PC-3 (cell line): ENCODE measurements at regions of chr4 and their contacts with region 1.

Region 1: GRCh38 chr4:55184600-55185523 is 59.5 kb upstream of the KDR start:
- DNase-seq: peak; percentile 76
- ATAC-seq: peak; percentile 38
- H3K4me3 ChIP-seq: peak overlapping the region; percentile 27
- H3K27ac ChIP-seq: peak overlapping the region; percentile 76
- H3K4me1 ChIP-seq: peaks cover 33% of the 10 kb centered on the region
- H3K27me3 ChIP-seq: no peaks in the 10 kb centered on the region
- CTCF ChIP-seq: peak; percentile 89

Region 2: DNA sequence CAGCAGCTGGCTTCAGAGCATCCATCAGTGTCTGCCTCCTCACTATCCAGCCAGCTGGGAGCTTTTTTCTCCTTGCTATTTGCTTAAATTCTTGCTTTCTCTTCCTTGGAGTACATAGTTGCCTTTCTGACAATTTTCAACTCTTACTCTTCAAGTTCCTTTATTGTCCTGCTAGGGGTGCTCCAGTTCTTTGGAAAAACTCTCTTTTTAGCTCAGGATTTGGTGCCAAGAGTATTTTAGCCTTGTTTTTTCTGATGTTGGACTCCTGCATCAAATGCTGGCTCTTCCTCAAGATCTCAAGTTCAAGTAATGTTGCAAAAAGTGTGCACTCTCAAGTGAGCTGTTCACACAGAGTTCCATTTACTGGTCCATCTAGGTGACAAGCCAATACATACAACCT is 185.9 kb before region 1 on chr4:
- CTCF ChIA-PET with region 1: interaction called, 3 read pairs
- POLR2A ChIA-PET with region 1: no interaction called
- intact Hi-C with region 1: loop called (anchors 2 kb)
- DNase-seq: peak; percentile 55
- ATAC-seq: peak; percentile 60
- H3K4me3 ChIP-seq: no peak overlapping the region
- H3K27ac ChIP-seq: no peak overlapping the region
- H3K4me1 ChIP-seq: peaks cover 7% of the 10 kb centered on the region; the same call in 1 of the 2 replicates
- H3K27me3 ChIP-seq: no peaks in the 10 kb centered on the region
- CTCF ChIP-seq: peak; percentile 75

Region 3: DNA sequence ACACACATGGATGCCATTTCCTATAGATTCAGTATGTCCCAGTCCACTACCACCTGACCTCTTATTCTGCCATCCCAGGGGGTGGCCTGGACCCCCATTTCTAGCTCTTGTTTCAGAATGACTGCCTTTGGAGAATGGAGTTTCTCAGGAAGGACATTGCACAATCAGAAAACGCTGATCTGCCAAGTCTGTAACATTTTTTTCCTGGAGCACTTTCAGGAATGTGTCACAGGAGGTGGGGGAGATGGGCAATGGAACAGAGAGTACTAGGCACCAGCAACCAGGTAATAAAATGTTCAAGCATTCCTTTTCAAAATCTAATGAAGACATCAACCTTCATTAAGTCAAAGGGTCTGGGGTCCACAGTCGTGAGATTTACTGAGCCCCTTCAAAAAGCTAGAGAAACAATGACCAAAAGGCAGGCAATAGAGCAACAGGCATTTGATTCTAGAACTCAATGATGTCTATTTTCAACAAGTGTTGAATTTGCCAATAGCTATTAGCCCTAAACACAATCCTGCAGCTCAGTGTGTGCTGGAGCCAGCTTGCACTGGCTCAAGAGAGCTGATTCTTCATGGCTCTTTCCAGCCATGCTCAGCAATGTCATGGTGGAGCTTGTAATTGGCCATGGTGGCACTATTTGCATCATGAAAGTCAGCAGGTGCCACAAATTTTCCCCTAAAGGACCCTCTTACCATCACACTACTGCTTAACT is 146.5 kb before region 1 on chr4:
- CTCF ChIA-PET with region 1: no interaction called
- POLR2A ChIA-PET with region 1: no interaction called
- intact Hi-C with region 1: loop called (anchors 10 kb)
- DNase-seq: peak; percentile 62
- ATAC-seq: no peak
- H3K4me3 ChIP-seq: no peak overlapping the region
- H3K27ac ChIP-seq: no peak overlapping the region
- H3K4me1 ChIP-seq: peaks cover 13% of the 10 kb centered on the region
- H3K27me3 ChIP-seq: no peaks in the 10 kb centered on the region
- CTCF ChIP-seq: no peak

Region 4: GRCh38 chr4:55398966-55399365 is 214.1 kb after region 1 on chr4:
- CTCF ChIA-PET with region 1: no interaction called
- POLR2A ChIA-PET with region 1: no interaction called
- intact Hi-C with region 1: no loop called
- DNase-seq: no peak
- ATAC-seq: no peak
- H3K4me3 ChIP-seq: peak overlapping the region; percentile 72
- H3K27ac ChIP-seq: peak overlapping the region; percentile 4; the same call in 1 of the 2 replicates
- H3K4me1 ChIP-seq: peaks cover 30% of the 10 kb centered on the region
- H3K27me3 ChIP-seq: no peaks in the 10 kb centered on the region
- CTCF ChIP-seq: no peak

Region 5: DNA sequence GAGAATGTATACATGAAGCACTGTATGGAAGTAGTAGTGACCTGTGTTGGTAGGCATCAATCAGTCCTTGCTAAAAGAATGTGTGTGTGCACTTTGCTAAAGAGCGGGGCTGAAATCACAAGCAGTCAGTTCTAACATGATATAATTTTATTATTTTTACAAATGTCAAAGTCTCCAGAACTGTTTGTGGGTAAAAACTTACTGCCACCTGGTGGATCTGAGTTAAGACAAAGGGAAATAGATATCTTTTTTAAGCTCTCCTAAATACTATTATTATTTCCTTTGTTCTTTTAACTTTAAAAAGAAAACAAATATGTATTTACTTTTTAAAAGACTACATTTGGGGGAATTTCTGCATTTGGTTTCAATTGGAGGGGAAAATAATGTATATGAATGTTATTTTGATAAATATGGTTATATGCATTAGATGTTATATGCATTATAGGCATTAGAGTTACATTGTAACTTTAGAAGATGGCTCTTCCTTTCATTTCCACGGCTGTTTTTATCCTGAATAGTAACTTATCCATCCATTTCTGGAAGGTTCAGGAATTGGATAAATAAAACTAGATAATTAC is 369.7 kb after region 1 on chr4:
- CTCF ChIA-PET with region 1: no interaction called
- POLR2A ChIA-PET with region 1: no interaction called
- intact Hi-C with region 1: loop called (anchors 5 kb)
- DNase-seq: peak; percentile 71
- ATAC-seq: 0 out of 2 replicates have a peak, but pooled peaks have one; percentile 4
- H3K4me3 ChIP-seq: no peak overlapping the region
- H3K27ac ChIP-seq: no peak overlapping the region
- H3K4me1 ChIP-seq: peaks cover 26% of the 10 kb centered on the region
- H3K27me3 ChIP-seq: no peaks in the 10 kb centered on the region
- CTCF ChIP-seq: peak; percentile 83